ENCODE measurements at regions of chr3 and their contacts with region 1.

Region 1: GRCh38 chr3:156382458-156383346 is 172.2 kb downstream of the SSR3 start:
- DNase-seq: no peak
- ATAC-seq: no peak
- H3K4me3 ChIP-seq: no peak overlapping the region
- H3K27ac ChIP-seq: peak overlapping the region in 6 of 12 donors; percentile 5 to 53 (median 34)
- H3K4me1 ChIP-seq: peaks cover 0 to 29% (median 3%) of the 10 kb centered on the region in 12 donors
- H3K27me3 ChIP-seq: no peaks in the 10 kb centered on the region
- CTCF ChIP-seq: peak in 11 of 12 donors; percentile 16 to 48 (median 35)
- POLR2A ChIP-seq: no peak

Region 2: GRCh38 chr3:156323466-156323865 is 59.2 kb before region 1 on chr3:
- intact Hi-C with region 1: loop called in 1 of 10 experiments (anchors 10 kb)
- DNase-seq: no peak
- ATAC-seq: no peak
- H3K4me3 ChIP-seq: no peak overlapping the region
- H3K27ac ChIP-seq: no peak overlapping the region
- H3K4me1 ChIP-seq: peaks cover 0 to 3% (median 0%) of the 10 kb centered on the region in 12 donors
- H3K27me3 ChIP-seq: no peaks in the 10 kb centered on the region
- CTCF ChIP-seq: no peak
- POLR2A ChIP-seq: no peak

Region 3: GRCh38 chr3:156483961-156484787 is 101.5 kb after region 1 on chr3:
- intact Hi-C with region 1: loop called in 1 of 10 experiments (anchors 10 kb)
- DNase-seq: no peak
- ATAC-seq: peak; percentile 51 to 84 (median 72)
- H3K4me3 ChIP-seq: peak overlapping the region in 1 of 12 donors; percentile 28
- H3K27ac ChIP-seq: peak overlapping the region in 11 of 12 donors; percentile 8 to 86 (median 48)
- H3K4me1 ChIP-seq: peaks cover 0 to 31% (median 3%) of the 10 kb centered on the region in 12 donors
- H3K27me3 ChIP-seq: no peaks in the 10 kb centered on the region
- CTCF ChIP-seq: no peak
- POLR2A ChIP-seq: no peak